ENCODE measurements at regions of chr1 and their contacts with region 1.

Region 1: DNA sequence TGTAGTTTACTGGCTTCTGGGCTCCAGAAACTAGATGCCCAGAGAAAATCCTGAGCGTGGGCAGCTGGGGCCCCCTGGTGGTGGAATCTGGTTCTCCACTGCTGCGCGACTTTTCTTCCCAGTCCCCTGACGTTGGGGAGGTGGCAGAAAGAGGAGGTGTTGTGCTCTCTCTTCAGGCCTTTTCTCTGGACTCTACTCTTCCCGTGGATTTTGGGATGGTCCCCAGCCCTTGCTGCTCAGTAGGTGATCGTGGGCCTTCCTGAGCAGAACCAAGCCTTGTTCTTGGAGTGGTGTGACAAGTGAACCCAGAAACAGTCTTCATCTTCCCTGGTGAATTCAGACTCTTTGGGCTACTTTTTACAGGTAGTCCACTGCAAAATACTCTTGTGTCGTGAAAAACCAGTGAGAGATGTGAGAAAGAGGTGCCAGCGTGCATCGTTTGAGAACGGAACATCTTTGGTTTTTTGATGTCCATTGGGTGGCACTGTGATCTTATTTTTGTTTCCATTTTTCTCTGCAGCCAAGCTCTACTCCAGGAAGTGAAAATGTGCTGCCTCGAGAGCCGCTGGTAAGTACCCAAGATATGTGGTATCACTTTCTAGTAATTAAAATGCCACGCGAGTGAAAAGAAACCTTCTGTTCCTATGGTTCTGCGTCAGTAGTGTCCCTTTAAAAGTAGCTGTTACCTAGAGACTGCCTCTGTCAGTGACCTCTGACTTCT is 20.2 kb downstream of the PEX14 start:
- DNase-seq: peak; percentile 76
- H3K4me3 Mint-ChIP-seq: peak overlapping the region; percentile 58
- H3K27ac Mint-ChIP-seq: peak overlapping the region; percentile 80
- H3K4me1 Mint-ChIP-seq: peaks cover 26% of the 10 kb centered on the region
- H3K27me3 Mint-ChIP-seq: no peaks in the 10 kb centered on the region
- CTCF ChIP-seq: peak; percentile 83

Region 2: DNA sequence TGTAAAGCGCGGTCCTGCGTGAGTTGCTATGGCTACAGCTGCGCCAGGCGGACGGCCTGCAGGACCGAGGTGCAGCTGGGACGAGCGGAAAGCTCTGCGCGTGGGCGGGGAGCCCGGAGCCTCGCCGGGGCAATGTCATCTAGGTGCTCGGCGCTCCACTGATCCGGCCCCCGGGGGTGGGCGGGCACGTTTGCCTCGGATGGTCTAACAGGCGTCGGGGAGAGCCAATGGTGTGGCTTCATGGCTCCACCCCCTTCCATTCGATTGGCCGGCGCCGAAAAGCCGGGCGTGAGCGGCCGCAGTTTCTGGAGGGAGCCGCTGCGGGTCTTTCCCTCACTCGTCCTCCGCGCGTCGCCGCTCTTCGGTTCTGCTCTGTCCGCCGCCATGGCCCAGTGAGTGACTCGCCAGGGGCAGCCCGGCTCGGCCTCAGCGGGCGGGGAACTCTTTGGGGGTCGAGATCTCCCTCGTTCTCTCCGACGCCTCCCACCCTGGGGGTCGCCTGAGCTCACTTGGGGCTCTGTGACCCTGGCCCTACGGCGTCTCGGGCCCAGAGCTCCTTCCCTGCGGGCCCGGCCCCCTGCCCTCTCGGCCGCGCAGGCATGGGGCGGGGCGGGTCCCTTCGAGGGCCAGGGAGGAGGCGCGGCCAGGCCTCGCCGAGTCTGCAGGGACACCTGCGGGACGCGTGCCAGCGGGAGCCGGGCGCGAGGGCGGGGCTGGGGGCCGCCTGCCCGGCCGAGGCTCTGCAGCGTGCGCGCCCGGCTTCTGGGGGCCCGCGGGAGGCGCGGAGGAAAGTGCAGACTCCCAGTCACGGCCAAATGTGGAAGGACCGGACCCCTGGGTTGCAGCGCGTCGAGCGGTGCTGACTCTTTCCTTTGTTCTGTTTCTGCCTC is 95.9 kb before region 1 on chr1 and contains the start of gene PGD:
- CTCF ChIA-PET with region 1: interaction called, 10 read pairs
- POLR2A ChIA-PET with region 1: interaction called, 5 read pairs
- intact Hi-C with region 1: no loop called
- DNase-seq: peak; percentile 99
- H3K4me3 Mint-ChIP-seq: peak within 1 kb of the TSS; percentile 93
- H3K27ac Mint-ChIP-seq: peak within 1 kb of the TSS; percentile 44
- H3K4me1 Mint-ChIP-seq: peaks cover 10% of the 10 kb centered on the region
- H3K27me3 Mint-ChIP-seq: no peaks in the 10 kb centered on the region
- CTCF ChIP-seq: no peak
- total RNA-seq, gene PGD: 56.4 and 70.6 TPM in 2 replicates

Region 3: GRCh38 chr1:10459181-10459580 is 35.7 kb before region 1 on chr1:
- CTCF ChIA-PET with region 1: interaction called, 22 read pairs
- POLR2A ChIA-PET with region 1: interaction called, 16 read pairs
- intact Hi-C with region 1: no loop called
- DNase-seq: peak; percentile 88
- H3K4me3 Mint-ChIP-seq: no peak overlapping the region
- H3K27ac Mint-ChIP-seq: peak overlapping the region; percentile 39
- H3K4me1 Mint-ChIP-seq: peaks cover 12% of the 10 kb centered on the region
- H3K27me3 Mint-ChIP-seq: no peaks in the 10 kb centered on the region
- CTCF ChIP-seq: no peak

Region 4: GRCh38 chr1:10479296-10479695 is 15.6 kb before region 1 on chr1:
- CTCF ChIA-PET with region 1: interaction called, 32 read pairs
- POLR2A ChIA-PET with region 1: interaction called, 7 read pairs
- intact Hi-C with region 1: no loop called
- DNase-seq: no peak
- H3K4me3 Mint-ChIP-seq: no peak overlapping the region
- H3K27ac Mint-ChIP-seq: no peak overlapping the region
- H3K4me1 Mint-ChIP-seq: peaks cover 13% of the 10 kb centered on the region
- H3K27me3 Mint-ChIP-seq: no peaks in the 10 kb centered on the region
- CTCF ChIP-seq: no peak

Region 5: GRCh38 chr1:10530281-10530740 is 35.4 kb after region 1 on chr1:
- CTCF ChIA-PET with region 1: interaction called, 11 read pairs
- POLR2A ChIA-PET with region 1: interaction called, 14 read pairs
- intact Hi-C with region 1: no loop called
- DNase-seq: peak; percentile 74
- H3K4me3 Mint-ChIP-seq: peak overlapping the region; percentile 44
- H3K27ac Mint-ChIP-seq: peak overlapping the region; percentile 37
- H3K4me1 Mint-ChIP-seq: peaks cover 32% of the 10 kb centered on the region
- H3K27me3 Mint-ChIP-seq: no peaks in the 10 kb centered on the region
- CTCF ChIP-seq: peak; percentile 89

Measured in MCF 10A (cell line).